Activated CD8-positive, alpha-beta T cell treated with anti-CD3 and anti-CD28 coated beads for 36 hours (primary cell): ENCODE measurements at regions of chr9 and their contacts with region 1.

Region 1: DNA sequence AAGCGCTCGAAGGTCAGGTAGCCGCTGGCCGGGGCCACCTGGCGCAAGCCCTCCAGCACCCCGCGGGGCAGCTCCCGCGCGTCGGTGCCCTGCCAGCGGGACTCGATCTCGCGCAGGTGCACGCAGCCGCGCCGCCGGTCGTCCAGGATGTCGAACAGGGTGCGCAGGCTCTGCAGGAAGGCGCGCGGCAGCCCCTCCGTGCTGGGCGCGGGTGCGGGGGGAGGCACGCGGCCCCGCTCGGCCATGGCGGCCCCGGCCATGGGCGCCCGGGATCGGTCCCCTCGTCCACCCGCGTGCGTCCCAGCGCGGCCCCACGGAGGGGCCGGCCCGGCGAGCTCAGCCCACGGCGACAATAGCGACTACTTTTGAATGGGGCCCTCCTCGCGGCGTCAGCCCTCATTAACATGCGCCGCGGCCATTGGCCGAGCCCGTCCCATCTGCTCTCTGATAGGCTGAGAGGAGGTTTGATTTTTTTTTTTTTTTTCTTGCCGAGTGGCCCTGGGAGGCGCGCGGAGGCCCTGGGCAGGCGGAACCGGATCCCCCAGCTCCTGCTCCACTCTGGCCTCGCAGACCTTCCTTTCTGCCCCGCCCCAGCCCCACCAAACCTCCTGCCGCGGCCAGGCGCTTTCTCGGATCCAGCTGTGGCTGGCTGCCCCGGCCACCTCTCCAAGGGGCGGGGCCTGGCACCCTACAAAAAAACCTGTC is at the start of gene SAPCD2:
- DNase-seq: peak; percentile 92
- ATAC-seq: peak; percentile 87
- H3K4me3 Mint-ChIP-seq: peak within 1 kb of the TSS; percentile 68
- H3K27ac Mint-ChIP-seq: peak within 1 kb of the TSS; percentile 62
- H3K4me1 Mint-ChIP-seq: peaks cover 7% of the 10 kb centered on the region
- H3K27me3 Mint-ChIP-seq: peaks cover 1% of the 10 kb centered on the region
- CTCF ChIP-seq: no peak
- total RNA-seq, gene SAPCD2: 13.5 to 13.7 TPM

Region 2: GRCh38 chr9:136790927-136791641 is 279.3 kb before region 1 on chr9 and contains the start of gene TMEM141:
- CTCF ChIA-PET with region 1: interaction called, 14 read pairs
- POLR2A ChIA-PET with region 1: no interaction called
- intact Hi-C with region 1: no loop called
- DNase-seq: peak; percentile 100
- ATAC-seq: peak; percentile 91
- H3K4me3 Mint-ChIP-seq: peak within 1 kb of the TSS; percentile 82
- H3K27ac Mint-ChIP-seq: peak within 1 kb of the TSS; percentile 86
- H3K4me1 Mint-ChIP-seq: peaks cover 31% of the 10 kb centered on the region
- H3K27me3 Mint-ChIP-seq: peaks cover 10% of the 10 kb centered on the region
- CTCF ChIP-seq: no peak
- total RNA-seq, gene TMEM141: 50.6 to 51.1 TPM

Region 3: DNA sequence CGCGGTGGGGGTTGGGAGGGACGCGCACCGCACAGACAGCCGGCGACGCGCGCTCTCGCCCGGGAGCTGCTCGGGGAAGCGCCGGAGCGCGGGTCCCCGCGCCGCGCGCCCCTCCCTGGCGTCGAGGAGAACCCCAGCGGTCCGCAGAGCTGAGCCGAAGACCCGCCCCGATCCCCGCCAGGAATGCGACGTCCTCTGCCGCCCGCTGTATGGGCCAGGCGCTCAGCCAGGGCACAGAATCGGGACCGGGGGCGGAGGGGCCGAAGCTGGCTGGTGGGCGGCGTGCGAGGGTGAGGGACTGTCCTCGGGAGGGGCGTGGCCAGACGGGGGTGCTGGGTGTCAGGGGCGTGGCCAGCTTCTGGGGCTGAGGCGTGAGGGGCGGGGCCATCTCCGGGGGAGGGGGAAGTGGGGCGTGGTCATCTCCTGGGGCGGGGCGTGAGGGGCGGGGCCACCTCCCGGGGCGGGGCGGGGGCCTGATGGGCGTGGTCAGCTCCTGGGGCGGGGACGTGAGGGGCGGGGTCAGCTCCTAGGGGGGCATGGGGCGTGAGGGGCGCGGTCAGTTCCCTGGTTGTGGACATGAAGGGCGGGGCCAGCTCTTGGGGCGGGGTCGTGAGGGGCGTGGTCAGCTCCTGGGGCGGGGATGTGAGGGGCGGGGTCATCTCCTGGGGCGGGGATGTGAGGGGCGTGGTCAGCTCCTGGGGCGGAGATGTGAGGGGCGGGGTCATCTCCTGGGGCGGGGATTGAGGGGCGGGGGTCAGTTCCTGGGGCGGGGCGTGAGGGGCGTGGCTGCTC is 92.1 kb before region 1 on chr9:
- CTCF ChIA-PET with region 1: interaction called, 12 read pairs
- POLR2A ChIA-PET with region 1: no interaction called
- intact Hi-C with region 1: no loop called
- DNase-seq: peak; percentile 76
- ATAC-seq: peak; percentile 75
- H3K4me3 Mint-ChIP-seq: no peak overlapping the region
- H3K27ac Mint-ChIP-seq: no peak overlapping the region
- H3K4me1 Mint-ChIP-seq: peaks cover 20% of the 10 kb centered on the region
- H3K27me3 Mint-ChIP-seq: no peaks in the 10 kb centered on the region
- CTCF ChIP-seq: no peak

Region 4: DNA sequence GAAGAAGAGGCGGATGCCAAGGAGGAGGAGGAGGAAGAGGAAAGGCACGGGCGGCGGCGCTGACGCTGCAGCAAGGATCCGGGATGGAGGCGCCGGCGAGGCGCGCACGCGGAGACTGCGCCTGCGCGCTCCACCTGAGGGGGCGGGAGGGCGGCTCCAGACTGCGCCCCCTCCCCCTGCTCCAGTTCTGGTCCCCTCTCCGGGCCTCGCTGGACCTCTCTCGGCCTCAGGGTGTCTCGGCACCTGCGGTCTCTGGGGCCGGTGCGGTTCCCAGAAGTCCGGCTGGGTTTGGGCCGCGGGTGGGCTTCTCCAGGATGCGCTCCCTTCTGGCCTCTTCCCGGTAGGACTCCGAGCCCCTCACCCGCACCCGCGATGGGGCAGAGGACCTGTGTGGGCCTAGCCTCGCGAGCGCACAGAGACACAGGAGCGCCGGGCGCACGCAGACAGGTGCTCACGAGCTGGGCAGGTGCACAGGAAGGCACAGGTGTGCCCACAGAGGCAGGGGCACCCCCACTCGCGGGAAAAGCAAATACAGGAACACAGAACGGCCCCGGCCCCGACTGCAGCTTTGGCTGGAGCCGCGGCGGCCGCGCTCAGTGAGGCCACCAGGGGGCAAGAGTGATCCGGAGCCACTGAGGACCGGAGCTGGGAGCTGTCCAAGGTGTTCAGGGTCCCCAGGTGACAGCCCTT is 24.1 kb before region 1 on chr9 and contains the start of gene NPDC1:
- CTCF ChIA-PET with region 1: interaction called, 164 read pairs
- POLR2A ChIA-PET with region 1: interaction called, 10 read pairs
- intact Hi-C with region 1: no loop called
- DNase-seq: peak; percentile 92
- ATAC-seq: peak; percentile 84
- H3K4me3 Mint-ChIP-seq: peak within 1 kb of the TSS; percentile 63
- H3K27ac Mint-ChIP-seq: no peak within 1 kb of the TSS
- H3K4me1 Mint-ChIP-seq: peaks cover 10% of the 10 kb centered on the region
- H3K27me3 Mint-ChIP-seq: peaks cover 42% of the 10 kb centered on the region
- CTCF ChIP-seq: peak; percentile 83
- total RNA-seq, gene NPDC1: 18.2 to 21.2 TPM

Region 5: DNA sequence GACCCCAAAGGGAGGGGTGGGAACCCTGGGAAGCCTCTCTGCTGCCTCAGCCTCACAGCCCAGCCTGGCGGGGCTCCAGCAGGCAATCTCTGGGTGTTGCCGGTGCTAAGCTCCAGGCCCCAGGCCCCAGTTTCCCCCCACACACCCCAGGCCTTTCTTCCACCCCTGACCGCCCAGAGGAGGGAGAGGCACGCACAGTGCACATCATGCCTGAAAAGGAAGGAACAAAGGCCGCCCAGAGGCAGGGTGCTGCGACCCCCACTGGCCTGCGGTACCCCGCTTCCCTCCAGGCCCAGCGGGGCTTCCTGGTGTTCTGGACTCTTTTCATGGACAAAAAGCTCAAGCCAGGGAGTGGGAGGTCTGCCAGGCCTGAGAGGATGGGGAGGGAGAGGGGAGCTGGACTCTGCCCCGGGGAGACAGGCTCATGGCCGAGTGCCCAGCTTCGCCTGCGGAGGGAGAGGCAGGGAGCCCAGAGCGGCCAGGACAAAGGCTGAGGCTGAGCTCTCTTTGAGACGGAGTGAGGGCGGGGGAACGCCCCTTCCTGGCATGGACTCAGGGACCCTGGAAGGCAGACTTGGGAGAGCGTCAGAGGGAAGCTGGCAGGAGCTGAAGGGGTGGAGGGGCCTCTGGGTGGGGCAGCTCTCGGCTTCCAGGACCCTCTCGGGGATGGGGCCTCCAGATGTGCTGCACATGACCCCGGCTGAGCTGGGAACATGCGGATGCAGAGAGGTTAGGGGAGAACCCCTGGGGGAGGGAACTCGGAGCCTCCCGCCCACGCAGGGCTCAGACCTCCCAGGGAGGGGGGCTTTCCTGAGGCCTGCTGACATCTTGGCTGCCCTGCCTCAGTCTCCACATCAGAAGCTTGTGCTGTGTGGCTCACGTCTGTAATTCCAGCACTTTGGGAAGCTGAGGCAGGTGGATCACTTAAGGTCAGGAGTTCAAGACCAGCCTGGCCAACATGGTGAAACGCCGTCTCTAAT is 14.7 kb before region 1 on chr9:
- CTCF ChIA-PET with region 1: interaction called, 164 read pairs
- POLR2A ChIA-PET with region 1: interaction called, 5 read pairs
- intact Hi-C with region 1: no loop called
- DNase-seq: no peak
- ATAC-seq: no peak
- H3K4me3 Mint-ChIP-seq: no peak overlapping the region
- H3K27ac Mint-ChIP-seq: no peak overlapping the region
- H3K4me1 Mint-ChIP-seq: no peaks in the 10 kb centered on the region
- H3K27me3 Mint-ChIP-seq: peaks cover 7% of the 10 kb centered on the region
- CTCF ChIP-seq: no peak

Region 6: GRCh38 chr9:137086531-137087408 is 16.4 kb after region 1 on chr9 and contains the start of gene MAN1B1:
- CTCF ChIA-PET with region 1: interaction called, 12 read pairs
- POLR2A ChIA-PET with region 1: interaction called, 11 read pairs
- intact Hi-C with region 1: no loop called
- DNase-seq: peak; percentile 100
- ATAC-seq: peak; percentile 86
- H3K4me3 Mint-ChIP-seq: peak within 1 kb of the TSS; percentile 90
- H3K27ac Mint-ChIP-seq: peak within 1 kb of the TSS; percentile 94
- H3K4me1 Mint-ChIP-seq: peaks cover 38% of the 10 kb centered on the region
- H3K27me3 Mint-ChIP-seq: no peaks in the 10 kb centered on the region
- CTCF ChIP-seq: no peak
- total RNA-seq, gene MAN1B1: 31.1 to 33.2 TPM

Region 7: DNA sequence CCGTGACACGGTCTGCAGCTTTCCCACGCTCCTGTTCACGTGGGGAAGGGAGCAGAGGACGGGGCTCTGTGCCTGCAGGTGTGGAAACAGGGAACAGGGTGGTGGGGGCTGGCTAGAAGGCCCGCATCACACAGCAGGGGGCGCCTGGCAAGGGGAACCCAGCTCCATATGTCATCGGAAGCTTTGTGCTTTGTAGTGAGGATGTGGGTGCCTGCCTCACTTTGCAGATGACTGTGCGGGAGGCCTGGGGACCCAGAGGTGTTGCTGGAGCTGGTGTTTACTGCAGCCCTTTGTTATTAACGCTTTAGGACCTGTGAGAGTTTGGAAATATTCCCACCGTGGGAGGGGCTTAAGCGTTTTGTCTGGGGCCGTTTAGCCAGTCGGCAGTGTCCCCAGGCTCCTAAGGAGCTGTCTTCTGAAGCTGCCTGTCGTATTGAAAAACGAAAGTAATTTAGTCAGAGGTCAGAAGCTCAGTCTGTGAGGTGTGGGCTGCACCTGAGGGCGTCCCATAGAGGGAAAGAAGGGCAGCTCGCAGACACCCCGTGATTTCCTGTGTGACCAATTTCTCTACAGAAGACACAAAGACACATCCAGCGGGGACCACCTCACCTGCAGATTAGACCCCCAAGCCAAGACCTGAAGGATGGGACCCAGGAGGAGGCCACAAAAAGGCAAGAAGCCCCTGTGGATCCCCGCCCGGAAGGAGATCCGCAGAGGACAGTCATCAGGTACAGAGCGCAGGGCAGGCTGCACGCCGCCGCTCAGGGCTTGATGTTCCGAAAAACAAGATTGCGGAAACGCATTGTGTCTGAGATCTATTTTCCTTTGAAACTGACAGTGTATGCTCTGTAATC is 25.5 kb after region 1 on chr9:
- CTCF ChIA-PET with region 1: interaction called, 12 read pairs
- POLR2A ChIA-PET with region 1: interaction called, 6 read pairs
- intact Hi-C with region 1: no loop called
- DNase-seq: peak; percentile 95
- ATAC-seq: peak; percentile 97
- H3K4me3 Mint-ChIP-seq: peak overlapping the region; percentile 78
- H3K27ac Mint-ChIP-seq: peak overlapping the region; percentile 91
- H3K4me1 Mint-ChIP-seq: peaks cover 23% of the 10 kb centered on the region
- H3K27me3 Mint-ChIP-seq: no peaks in the 10 kb centered on the region
- CTCF ChIP-seq: peak; percentile 74